ENCODE measurements at regions of chr17 and their contacts with region 1.

Region 1: DNA sequence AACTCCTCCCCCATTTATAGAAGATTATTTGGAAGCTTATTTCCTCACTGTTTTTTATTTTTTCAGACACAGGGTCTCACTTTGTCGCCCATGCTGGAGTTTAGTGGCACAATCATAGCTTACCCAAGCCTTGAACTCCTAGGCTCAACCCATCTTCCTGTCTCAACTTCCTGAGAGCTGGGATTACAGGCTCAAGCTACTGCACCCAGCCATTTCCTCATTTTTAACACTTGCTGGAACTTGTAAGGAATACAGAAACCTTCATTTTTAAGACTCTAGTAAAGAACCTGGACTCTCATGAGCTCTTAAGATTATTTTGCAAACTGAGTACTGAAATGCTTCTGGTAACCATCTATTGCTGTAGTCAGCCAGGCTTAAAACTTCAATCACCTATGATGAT is 29.9 kb downstream of the KANSL1 start:
- DNase-seq: no peak
- CTCF ChIP-seq: no peak

Region 2: DNA sequence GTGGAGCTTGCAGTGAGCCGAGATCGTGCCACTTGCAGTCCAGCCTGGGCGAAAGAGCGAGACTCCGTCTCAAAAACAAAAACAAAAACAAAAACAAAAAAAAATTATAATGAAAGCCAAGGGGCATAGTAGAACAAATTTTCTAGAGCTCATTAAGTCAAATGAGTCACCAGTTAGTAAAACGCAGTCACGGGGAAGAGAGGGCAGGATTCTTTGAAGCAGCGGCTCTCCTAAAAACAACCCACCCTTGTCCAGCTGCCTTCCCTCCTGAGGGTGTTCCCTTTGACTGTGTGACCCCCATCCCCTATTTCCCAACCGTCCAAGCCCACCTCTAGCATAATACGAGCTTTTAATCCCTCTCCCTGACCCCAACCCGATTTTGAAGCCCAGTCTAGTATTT is 208.4 kb before region 1 on chr17:
- CTCF ChIA-PET with region 1: no interaction called
- POLR2A ChIA-PET with region 1: no interaction called
- DNase-seq: no peak
- CTCF ChIP-seq: no peak

Region 3: GRCh38 chr17:45990886-45991285 is 172.4 kb before region 1 on chr17:
- CTCF ChIA-PET with region 1: no interaction called
- POLR2A ChIA-PET with region 1: no interaction called
- DNase-seq: no peak
- CTCF ChIP-seq: no peak

Region 4: GRCh38 chr17:46152423-46152822 is 10.9 kb before region 1 on chr17:
- CTCF ChIA-PET with region 1: interaction called, 12 read pairs
- POLR2A ChIA-PET with region 1: interaction called, 3 read pairs
- DNase-seq: no peak
- CTCF ChIP-seq: no peak

Region 5: DNA sequence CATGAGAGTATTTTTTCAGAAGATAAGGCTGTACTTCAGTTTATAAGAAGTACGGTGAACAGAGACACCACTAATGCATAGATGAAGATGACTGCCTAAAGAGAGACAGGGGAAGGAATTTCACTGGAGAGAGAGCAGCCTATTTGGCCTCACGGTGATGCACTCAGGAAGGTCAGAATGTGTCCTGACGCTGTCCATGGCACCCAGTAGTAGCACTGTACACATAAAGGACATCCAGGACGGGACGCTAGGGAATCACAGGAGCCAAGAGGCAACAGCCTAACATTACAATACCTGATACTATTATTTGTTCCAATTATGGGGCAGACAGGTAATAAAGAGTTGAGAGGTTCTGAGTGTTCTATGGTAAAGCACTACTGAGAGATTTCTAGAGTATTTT is 106.7 kb after region 1 on chr17:
- CTCF ChIA-PET with region 1: no interaction called
- POLR2A ChIA-PET with region 1: no interaction called
- DNase-seq: no peak
- CTCF ChIP-seq: no peak

Measured in GM10248 (cell line).